ENCODE measurements at regions of chr1 and their contacts with region 1.

Region 1: GRCh38 chr1:153545067-153546055 is at the start of gene S100A4:
- DNase-seq: peak; percentile 57 to 93 (median 78)
- ATAC-seq: peak; percentile 77 to 82
- H3K4me3 Mint-ChIP-seq: peak within 1 kb of the TSS; percentile 88 to 97 (median 92)
- H3K27ac Mint-ChIP-seq: peak within 1 kb of the TSS; percentile 96 to 99 (median 97)
- H3K4me1 Mint-ChIP-seq: peaks cover 54 to 82% (median 75%) of the 10 kb centered on the region in 4 donors
- H3K27me3 Mint-ChIP-seq: no peaks in the 10 kb centered on the region
- polyA plus RNA-seq, gene S100A4: 421 to 1,131 (median 581) TPM

Region 2: DNA sequence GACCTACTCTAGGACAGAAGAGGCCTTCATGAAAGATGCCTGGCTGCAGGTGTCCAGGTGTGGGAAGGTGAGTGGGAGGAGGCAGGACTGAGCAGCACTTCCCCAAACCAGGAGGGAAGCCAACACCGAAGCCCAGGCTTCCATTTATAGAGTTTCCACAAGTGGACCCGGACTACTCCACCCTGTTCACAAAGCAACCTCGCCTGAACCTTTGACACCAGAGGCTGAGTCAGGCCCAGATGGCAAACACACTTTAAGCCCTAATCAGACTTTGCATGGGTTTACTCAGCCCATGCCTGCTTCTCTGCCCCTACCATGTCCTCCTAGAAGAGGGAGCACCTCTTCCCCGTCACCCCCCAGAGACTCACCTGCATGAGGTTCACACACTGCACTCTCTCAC is 314.0 kb before region 1 on chr1:
- POLR2A ChIA-PET with region 1: no interaction called
- DNase-seq: no peak
- ATAC-seq: no peak
- H3K4me3 Mint-ChIP-seq: no peak overlapping the region
- H3K27ac Mint-ChIP-seq: peak overlapping the region in 1 of 10 donors; percentile 36
- H3K4me1 Mint-ChIP-seq: peaks cover 0 to 3% (median 0%) of the 10 kb centered on the region in 4 donors
- H3K27me3 Mint-ChIP-seq: peaks cover 5 to 23% (median 13%) of the 10 kb centered on the region in 5 donors

Region 3: DNA sequence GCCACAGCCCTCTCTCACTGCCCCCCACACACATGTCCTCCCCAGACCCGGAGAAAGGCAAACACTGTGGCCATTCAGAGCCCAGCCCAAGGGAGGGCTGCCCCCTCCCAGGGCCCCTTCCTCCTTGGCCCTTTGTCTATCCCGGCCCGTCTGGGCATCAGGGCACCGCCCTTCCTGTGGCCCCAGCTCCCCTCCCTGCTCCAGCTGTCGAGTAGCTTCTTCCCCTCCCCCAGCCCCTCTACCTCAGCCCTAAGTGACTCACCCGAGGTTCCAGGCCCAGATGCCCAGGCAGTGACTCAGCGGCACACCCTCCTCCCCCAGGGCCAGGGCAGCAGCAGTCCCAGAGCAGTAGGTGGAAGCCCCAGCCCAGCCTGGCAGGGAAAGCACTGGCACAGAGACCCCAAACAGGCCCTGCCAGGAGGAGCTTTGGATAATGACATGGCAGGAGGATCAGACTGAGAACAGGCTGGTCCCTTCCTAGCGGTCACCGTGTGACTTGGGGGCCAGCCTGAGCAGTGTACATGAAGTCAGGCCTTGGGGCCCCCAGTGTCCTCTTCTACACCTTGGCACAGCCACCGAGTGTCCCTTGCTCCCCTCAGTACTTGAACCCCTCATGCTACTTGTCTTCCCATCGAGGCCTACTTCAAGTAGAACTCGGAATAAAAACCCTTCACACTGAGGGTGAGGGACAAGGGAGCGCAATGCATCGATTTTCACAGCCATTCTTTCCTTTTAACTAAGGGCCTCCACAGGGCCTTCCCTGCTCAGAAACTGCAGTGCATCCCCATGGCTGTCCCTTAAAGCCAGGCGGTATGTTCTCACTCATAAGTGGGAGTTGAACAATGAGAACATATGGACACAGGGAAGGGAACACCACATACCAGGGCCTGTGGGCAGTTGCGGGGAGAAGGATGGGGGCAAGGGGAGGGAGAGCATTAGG is 21.3 kb after region 1 on chr1:
- POLR2A ChIA-PET with region 1: interaction called, 14 read pairs
- DNase-seq: peak in 4 of 10 donors; percentile 21 to 81 (median 52)
- ATAC-seq: peak; percentile 62 to 85
- H3K4me3 Mint-ChIP-seq: peak overlapping the region in 6 of 10 donors; percentile 9 to 71 (median 52)
- H3K27ac Mint-ChIP-seq: peak overlapping the region in 8 of 10 donors; percentile 40 to 96 (median 68)
- H3K4me1 Mint-ChIP-seq: peaks cover 16 to 33% (median 30%) of the 10 kb centered on the region in 4 donors
- H3K27me3 Mint-ChIP-seq: peaks cover 0 to 9% (median 2%) of the 10 kb centered on the region in 5 donors

Region 4: DNA sequence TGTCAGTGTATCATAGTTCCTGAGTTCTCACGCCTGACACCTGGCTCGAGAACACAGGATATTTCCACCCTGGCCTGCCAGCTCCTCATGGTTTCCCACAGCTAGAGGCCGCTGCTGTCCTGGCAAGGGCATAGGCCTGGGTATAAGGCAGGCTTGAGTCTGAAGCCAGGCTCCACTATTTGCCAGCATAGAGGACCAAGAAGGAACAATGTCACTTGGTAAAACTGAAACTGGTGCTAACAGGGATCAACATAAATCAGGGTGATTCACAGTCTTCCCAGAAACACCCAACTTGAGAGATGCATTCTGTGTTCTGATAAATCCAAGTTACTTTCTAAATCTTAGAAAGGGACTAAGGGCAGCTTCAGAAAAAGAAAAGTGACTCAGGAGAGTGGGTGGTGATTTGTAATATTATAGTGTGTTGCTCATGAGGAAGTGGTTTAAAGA is 27.2 kb after region 1 on chr1:
- POLR2A ChIA-PET with region 1: interaction called, 13 read pairs
- DNase-seq: peak in 9 of 10 donors; percentile 25 to 77 (median 39)
- ATAC-seq: peak; percentile 82 to 87
- H3K4me3 Mint-ChIP-seq: no peak overlapping the region
- H3K27ac Mint-ChIP-seq: peak overlapping the region in 2 of 10 donors; percentile 9 to 10
- H3K4me1 Mint-ChIP-seq: peaks cover 10 to 20% (median 13%) of the 10 kb centered on the region in 4 donors
- H3K27me3 Mint-ChIP-seq: peaks cover 2 to 18% (median 4%) of the 10 kb centered on the region in 5 donors